ENCODE measurements at regions of chr11 and their contacts with region 1.

Region 1: GRCh38 chr11:10735481-10736475 is 15.3 kb upstream of the CTR9 start:
- DNase-seq: peak; percentile 87
- H3K4me3 ChIP-seq: peak overlapping the region; percentile 50
- CTCF ChIP-seq: peak; percentile 94

Region 2: DNA sequence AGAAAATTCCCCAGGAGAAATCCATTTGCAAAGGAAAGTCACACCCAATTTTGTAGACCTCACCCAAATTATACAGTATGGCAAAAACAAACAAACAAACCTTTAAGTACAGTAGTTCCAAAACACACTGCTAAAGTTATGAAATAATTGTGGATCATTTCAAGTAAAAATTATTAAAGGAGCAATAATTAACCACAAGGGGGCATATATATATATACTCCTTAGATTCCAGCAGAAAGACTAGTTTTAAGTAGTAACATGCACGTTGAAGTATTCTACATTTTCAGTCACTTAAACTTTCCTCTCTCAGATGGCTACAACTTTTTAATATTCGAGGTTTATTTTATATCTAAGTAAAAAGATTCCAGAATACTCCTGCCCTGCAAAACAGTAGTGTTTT is 221.6 kb before region 1 on chr11:
- CTCF ChIA-PET with region 1: interaction called, 52 read pairs
- POLR2A ChIA-PET with region 1: no interaction called
- DNase-seq: no peak
- H3K4me3 ChIP-seq: no peak overlapping the region
- CTCF ChIP-seq: no peak

Region 3: DNA sequence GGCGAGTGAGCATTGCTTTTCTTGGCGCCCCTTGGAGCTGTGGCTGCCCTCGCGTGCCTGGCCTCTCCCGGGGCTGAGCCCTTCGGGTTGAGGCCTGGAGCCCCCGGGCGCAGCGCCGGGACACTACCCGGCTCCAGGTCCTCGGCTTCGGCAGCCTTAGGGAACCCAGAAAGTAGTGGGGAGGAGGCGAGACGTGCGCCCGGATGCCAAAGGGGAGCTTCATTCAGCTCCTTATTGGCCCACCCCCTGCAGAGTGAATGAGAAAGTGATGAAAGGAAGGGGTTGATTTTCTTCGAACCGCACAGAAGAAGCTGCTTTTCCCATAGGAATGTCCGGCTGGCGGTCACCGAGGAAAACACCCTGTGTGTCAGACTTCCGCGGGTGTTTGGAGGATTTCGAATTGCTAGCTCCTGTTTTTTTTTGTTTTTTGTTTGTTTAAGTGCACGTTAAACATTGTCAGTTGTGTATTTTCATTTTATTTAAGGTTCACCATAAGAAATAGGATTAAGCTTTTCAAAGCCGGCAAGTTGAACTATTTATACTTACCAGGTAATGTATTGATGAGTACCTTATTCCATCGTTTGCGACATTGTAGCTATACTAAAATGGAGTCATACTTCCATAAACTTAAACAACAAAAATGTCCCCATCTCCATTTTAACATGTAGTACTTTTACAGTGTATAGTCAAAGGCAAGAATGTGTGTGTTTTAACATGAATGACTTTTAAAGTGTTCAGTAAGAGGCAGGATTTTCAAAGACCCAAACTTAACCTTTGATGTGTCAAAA is 73.8 kb after region 1 on chr11:
- CTCF ChIA-PET with region 1: no interaction called
- POLR2A ChIA-PET with region 1: no interaction called
- DNase-seq: no peak
- H3K4me3 ChIP-seq: peak overlapping the region; percentile 67
- CTCF ChIP-seq: no peak

Measured in AG04449 (cell line).